PC-9 (cell line): ENCODE measurements at regions of chr4 and their contacts with region 1.

Region 1: DNA sequence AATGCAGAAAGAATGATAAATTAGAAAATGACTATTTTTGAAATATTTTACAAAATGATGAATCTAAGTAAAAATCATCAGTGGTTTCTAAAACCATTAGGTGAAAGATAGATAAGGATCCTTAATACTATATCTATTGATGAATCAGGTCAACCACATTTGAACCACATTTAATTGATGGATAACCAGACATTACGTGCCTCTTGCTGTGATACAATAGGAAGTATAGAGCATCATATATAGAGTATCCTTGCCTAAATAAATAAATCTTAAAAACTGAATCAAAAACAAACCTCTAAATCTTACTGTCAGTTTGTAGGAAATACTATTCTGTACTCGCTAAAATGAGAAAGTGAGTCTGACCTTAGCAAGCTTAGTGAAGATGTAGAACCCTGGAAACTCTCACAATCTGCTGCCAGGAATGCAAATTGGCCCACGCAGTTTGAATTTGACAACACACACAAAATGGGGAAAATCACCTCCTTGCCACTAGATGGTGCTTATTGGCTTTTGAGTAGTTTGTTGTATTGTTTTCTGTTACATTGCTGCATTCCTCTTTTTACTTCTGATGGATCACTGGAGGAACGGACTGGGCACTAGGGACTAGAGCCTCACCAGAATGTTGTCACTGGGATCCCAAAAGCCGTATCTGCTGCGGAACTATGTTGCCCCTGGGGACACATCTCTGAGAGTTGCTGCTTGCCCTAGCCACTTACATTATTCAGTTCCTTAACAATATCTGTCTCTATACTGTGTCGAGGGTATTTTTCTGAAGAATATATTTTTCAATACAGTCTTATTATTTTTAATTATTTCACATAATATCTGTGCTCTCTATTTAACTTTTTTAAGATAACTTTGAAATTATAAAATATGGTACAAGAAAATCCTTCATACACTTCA is 25.4 kb upstream of the SLAIN2 start:
- DNase-seq: peak; percentile 21 to 59
- H3K4me3 ChIP-seq: no peak overlapping the region
- H3K27ac ChIP-seq: no peak overlapping the region
- H3K4me1 ChIP-seq: no peaks in the 10 kb centered on the region
- H3K27me3 ChIP-seq: no peaks in the 10 kb centered on the region
- CTCF ChIP-seq: peak; percentile 77

Region 2: DNA sequence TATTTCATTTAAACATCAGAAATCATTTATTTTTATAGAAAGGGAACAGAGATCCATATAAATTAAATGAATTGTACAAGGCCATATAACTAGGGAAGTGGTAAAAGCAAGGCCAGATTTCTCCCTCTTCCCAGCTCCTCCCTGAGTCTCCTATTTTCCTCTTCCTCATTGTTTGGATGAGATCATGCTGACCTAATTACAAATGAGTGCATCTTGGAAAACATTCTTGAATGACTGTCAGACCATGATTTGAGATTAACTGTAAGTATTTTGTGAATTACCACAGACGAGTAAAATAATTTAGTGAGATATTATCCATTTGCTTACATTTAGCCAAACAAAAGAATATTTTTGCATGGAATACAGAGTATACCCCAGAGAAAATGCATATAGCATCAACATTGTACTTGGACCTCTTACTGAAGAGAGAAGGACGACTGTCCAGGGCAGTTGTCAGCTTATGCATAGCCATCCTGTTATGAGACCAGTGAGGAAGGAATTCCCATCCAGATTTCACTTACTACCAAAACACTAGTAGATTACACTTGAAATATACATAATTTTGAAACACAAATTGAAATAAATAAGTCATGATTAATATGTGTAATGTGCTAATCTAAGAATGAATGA is 72.7 kb after region 1 on chr4:
- CTCF ChIA-PET with region 1: no interaction called
- POLR2A ChIA-PET with region 1: no interaction called
- intact Hi-C with region 1: loop called (anchors 10 kb)
- DNase-seq: no peak
- H3K4me3 ChIP-seq: no peak overlapping the region
- H3K27ac ChIP-seq: no peak overlapping the region
- H3K4me1 ChIP-seq: no peaks in the 10 kb centered on the region
- H3K27me3 ChIP-seq: no peaks in the 10 kb centered on the region
- CTCF ChIP-seq: no peak

Region 3: DNA sequence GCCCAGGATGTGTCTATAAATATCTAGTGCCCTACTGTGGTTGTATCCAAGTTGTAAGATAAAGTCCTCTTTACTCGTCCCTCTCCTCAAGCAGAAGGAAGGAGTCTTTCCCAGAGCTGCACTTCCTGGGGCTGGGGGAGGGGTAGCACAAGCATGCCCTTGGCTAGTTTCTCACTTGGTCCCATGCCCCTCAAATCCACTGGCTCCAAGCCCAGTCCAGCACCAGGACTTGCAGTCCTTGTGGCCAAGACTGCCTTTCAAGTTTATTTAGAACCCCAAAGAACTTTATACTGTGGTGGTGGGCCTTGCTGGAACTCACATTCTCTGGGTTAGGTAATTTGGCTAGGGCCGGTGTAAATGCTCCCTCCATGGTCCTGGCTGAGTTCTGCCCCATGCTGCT is 124.0 kb after region 1 on chr4:
- CTCF ChIA-PET with region 1: no interaction called
- POLR2A ChIA-PET with region 1: no interaction called
- intact Hi-C with region 1: loop called (anchors 10 kb)
- DNase-seq: no peak
- H3K4me3 ChIP-seq: no peak overlapping the region
- H3K27ac ChIP-seq: no peak overlapping the region
- H3K4me1 ChIP-seq: no peaks in the 10 kb centered on the region
- H3K27me3 ChIP-seq: no peaks in the 10 kb centered on the region
- CTCF ChIP-seq: no peak

Region 4: GRCh38 chr4:48546336-48546735 is 230.4 kb after region 1 on chr4:
- CTCF ChIA-PET with region 1: no interaction called
- POLR2A ChIA-PET with region 1: no interaction called
- intact Hi-C with region 1: loop called (anchors 1 kb)
- DNase-seq: peak in 1 of 2 experiments; percentile 15
- H3K4me3 ChIP-seq: no peak overlapping the region
- H3K27ac ChIP-seq: no peak overlapping the region
- H3K4me1 ChIP-seq: no peaks in the 10 kb centered on the region
- H3K27me3 ChIP-seq: no peaks in the 10 kb centered on the region
- CTCF ChIP-seq: peak; percentile 78